ENCODE measurements at regions of chr1 and their contacts with region 1.

Region 1: DNA sequence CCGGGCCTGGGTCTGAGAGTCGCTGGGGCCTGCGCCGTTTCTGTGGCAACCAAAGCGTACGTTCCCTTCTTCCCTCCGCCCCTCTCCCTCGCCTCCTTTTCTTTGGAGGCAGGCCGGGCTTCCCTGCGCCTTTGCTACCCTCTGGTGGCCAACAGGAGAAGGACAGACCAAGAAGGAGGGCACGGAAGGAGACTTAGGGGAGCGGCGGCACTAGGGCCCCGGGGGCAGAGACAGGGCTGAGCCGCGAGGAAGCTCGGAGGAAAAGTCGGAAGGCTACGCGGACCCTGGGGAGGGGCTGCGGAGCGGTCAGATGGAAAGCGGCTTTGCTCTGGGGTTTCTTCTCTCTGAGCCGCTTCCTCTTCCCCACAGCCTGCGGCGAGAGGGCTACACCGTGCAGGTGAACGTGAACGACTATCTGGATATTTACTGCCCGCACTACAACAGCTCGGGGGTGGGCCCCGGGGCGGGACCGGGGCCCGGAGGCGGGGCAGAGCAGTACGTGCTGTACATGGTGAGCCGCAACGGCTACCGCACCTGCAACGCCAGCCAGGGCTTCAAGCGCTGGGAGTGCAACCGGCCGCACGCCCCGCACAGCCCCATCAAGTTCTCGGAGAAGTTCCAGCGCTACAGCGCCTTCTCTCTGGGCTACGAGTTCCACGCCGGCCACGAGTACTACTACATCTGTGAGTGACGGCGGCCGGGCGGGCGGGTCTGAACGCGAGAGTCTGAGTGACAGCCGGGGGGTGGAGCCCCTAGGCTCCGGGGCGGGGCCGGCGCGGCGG is 6.3 kb downstream of the EFNA3 start:
- DNase-seq: peak; percentile 95
- H3K27ac ChIP-seq: peak overlapping the region; percentile 89
- CTCF ChIP-seq: peak; percentile 81

Region 2: GRCh38 chr1:155044812-155045690 is 39.9 kb before region 1 on chr1:
- CTCF ChIA-PET with region 1: interaction called, 16 read pairs
- POLR2A ChIA-PET with region 1: no interaction called
- DNase-seq: peak; percentile 66
- H3K27ac ChIP-seq: peak overlapping the region; percentile 77
- CTCF ChIP-seq: peak; percentile 74

Region 3: GRCh38 chr1:155050560-155051341 is 34.2 kb before region 1 on chr1 and contains the start of gene ADAM15:
- CTCF ChIA-PET with region 1: interaction called, 8 read pairs
- POLR2A ChIA-PET with region 1: interaction called, 12 read pairs
- DNase-seq: peak; percentile 93
- H3K27ac ChIP-seq: peak within 1 kb of the TSS; percentile 98
- CTCF ChIP-seq: peak; percentile 94

Region 4: GRCh38 chr1:155061381-155062150 is 23.3 kb before region 1 on chr1:
- CTCF ChIA-PET with region 1: interaction called, 11 read pairs
- POLR2A ChIA-PET with region 1: no interaction called
- DNase-seq: peak; percentile 83
- H3K27ac ChIP-seq: peak overlapping the region; percentile 92
- CTCF ChIP-seq: peak; percentile 98

Region 5: GRCh38 chr1:155127105-155127964 is 42.4 kb after region 1 on chr1 and contains the start of gene EFNA1:
- CTCF ChIA-PET with region 1: interaction called, 10 read pairs
- POLR2A ChIA-PET with region 1: no interaction called
- DNase-seq: no peak
- H3K27ac ChIP-seq: peak within 1 kb of the TSS; percentile 98
- CTCF ChIP-seq: no peak

Region 6: GRCh38 chr1:155172732-155173477 is 88.0 kb after region 1 on chr1 and contains the start of gene KRTCAP2:
- CTCF ChIA-PET with region 1: interaction called, 21 read pairs
- POLR2A ChIA-PET with region 1: no interaction called
- DNase-seq: peak; percentile 98
- H3K27ac ChIP-seq: peak within 1 kb of the TSS; percentile 87
- CTCF ChIP-seq: peak; percentile 93

Region 7: GRCh38 chr1:155410931-155411330 is 326.0 kb after region 1 on chr1:
- CTCF ChIA-PET with region 1: no interaction called
- POLR2A ChIA-PET with region 1: no interaction called
- DNase-seq: no peak
- H3K27ac ChIP-seq: no peak overlapping the region
- CTCF ChIP-seq: no peak

Measured in RWPE1 (cell line).